ENCODE measurements at regions of chr14 and their contacts with region 1.

Region 1: GRCh38 chr14:89912667-89913211 is 41.8 kb downstream of the EFCAB11 start:
- DNase-seq: no peak
- H3K4me3 ChIP-seq: no peak overlapping the region
- H3K27ac ChIP-seq: no peak overlapping the region
- H3K4me1 ChIP-seq: peaks cover 0 to 4% of the 10 kb centered on the region in 2 donors
- H3K27me3 ChIP-seq: no peaks in the 10 kb centered on the region
- CTCF ChIP-seq: no peak
- POLR2A ChIP-seq: no peak

Region 2: GRCh38 chr14:89027097-89027740 is 885.5 kb before region 1 on chr14:
- intact Hi-C with region 1: loop called (anchors 5 kb)
- DNase-seq: peak; percentile 28 to 35
- H3K4me3 ChIP-seq: peak overlapping the region in 2 of 3 donors; percentile 36 to 37
- H3K27ac ChIP-seq: no peak overlapping the region
- H3K4me1 ChIP-seq: peaks cover 0 to 10% of the 10 kb centered on the region in 2 donors
- H3K27me3 ChIP-seq: no peaks in the 10 kb centered on the region
- CTCF ChIP-seq: peak; percentile 35 to 98 (median 74)
- POLR2A ChIP-seq: no peak